HCT116 (cell line): ENCODE measurements at regions of chr3 and their contacts with region 1.

Region 1: GRCh38 chr3:45123030-45123429 is 23.1 kb downstream of the CDCP1 start:
- DNase-seq: no peak
- ATAC-seq: peak; percentile 3; the same call in 1 of the 2 replicates
- H3K4me3 ChIP-seq: peak overlapping the region; percentile 6 to 33; a peak in 3 of 4 replicates
- H3K27ac ChIP-seq: peak overlapping the region; percentile 91
- H3K4me1 ChIP-seq: peaks cover 96 to 100% of the 10 kb centered on the region in 2 experiments
- H3K27me3 ChIP-seq: no peaks in the 10 kb centered on the region
- CTCF ChIP-seq: no peak
- POLR2A ChIP-seq: no peak
- RAD21 ChIP-seq: no peak

Region 2: GRCh38 chr3:45043728-45044299 is 79.2 kb before region 1 on chr3:
- CTCF ChIA-PET with region 1: interaction called, 10 read pairs
- POLR2A ChIA-PET with region 1: no interaction called
- RAD21 ChIA-PET with region 1: no interaction called
- intact Hi-C with region 1: loop called (anchors 5 kb)
- DNase-seq: no peak
- ATAC-seq: peak; percentile 26; the same call in 1 of the 2 replicates
- H3K4me3 ChIP-seq: no peak overlapping the region
- H3K27ac ChIP-seq: no peak overlapping the region
- H3K4me1 ChIP-seq: peaks cover 8 to 20% of the 10 kb centered on the region in 2 experiments; a peak in 3 of 4 replicates
- H3K27me3 ChIP-seq: no peaks in the 10 kb centered on the region
- CTCF ChIP-seq: 0 out of 6 replicates have a peak, but pooled peaks of 1 of the 3 experiments have one; percentile 38
- POLR2A ChIP-seq: no peak
- RAD21 ChIP-seq: peak; percentile 66

Region 3: DNA sequence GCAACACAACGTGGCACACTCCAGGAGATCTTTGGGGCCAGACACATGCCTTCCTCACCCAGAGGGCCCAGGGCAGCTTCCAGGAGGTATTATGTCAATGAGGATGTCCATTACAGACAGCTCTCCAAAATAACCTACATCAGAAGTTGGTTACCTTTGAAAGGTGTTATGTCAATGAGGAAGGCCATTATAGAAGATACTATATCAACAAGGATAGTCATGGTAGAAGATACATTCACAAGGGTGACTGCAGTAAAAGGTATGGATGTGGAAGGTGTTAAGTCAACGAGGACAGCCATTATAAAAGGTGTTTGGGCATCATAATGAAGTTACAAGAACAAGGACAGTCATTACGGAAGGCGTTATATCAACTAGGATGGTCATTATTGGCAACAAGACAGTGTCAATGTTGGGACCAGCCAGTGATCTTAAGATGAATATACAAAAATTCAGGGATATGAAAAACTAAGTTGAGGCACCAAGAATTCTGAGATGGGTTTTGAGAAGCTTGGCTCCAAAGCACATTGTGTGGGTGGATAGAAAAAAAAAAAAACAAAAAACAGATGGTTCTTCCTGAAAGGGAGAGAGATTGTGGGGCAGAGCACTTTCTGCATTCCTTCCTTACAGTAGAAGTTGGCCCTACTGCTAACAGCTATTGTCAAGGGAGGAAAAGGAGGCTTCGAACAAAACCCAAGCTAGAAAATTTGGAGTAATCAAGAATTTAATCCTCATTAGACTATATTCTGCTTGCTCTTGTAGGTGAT is 11.9 kb after region 1 on chr3:
- CTCF ChIA-PET with region 1: interaction called, 3 read pairs
- POLR2A ChIA-PET with region 1: interaction called, 31 read pairs
- RAD21 ChIA-PET with region 1: interaction called in 1 of 2 experiments, 3 read pairs
- intact Hi-C with region 1: loop called (anchors 1 kb)
- DNase-seq: no peak
- ATAC-seq: no peak
- H3K4me3 ChIP-seq: 0 out of 4 replicates have a peak overlapping the region, but pooled peaks of 1 of the 2 experiments have one; percentile 2
- H3K27ac ChIP-seq: peak overlapping the region; percentile 92
- H3K4me1 ChIP-seq: peaks cover 89 to 100% of the 10 kb centered on the region in 2 experiments
- H3K27me3 ChIP-seq: no peaks in the 10 kb centered on the region
- CTCF ChIP-seq: no peak
- POLR2A ChIP-seq: no peak
- RAD21 ChIP-seq: no peak

Region 4: DNA sequence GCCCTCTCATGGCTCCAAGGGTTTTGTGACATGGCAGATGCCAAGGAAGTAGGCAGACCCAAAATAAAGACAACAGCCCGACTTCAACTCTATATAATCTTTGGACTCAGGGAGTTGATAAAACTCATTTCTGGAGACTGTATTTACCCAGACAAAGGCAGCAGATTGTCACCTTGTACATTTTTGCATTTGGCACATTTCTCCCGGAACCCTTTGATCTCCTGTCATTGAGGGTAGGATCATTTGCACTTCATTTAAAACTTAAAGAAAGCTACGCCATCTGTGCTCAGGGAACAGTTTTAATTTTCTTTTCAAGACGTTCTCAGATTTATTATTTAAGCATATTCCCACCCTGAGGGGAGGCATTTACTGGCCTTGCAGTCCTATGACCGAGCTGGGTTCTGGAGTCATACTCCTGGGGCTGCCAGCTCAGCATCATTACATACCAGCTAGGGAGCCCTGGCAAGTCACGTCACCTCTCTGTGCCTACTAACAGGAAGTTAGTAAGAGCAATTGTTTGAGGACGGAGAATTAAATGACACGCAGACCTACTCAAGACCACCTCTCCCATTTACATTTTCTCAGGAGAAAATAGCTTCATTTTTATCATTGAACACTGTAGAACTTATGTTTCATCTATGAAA is 17.2 kb after region 1 on chr3:
- CTCF ChIA-PET with region 1: interaction called, 3 read pairs
- POLR2A ChIA-PET with region 1: interaction called, 31 read pairs
- RAD21 ChIA-PET with region 1: no interaction called
- intact Hi-C with region 1: no loop called
- DNase-seq: no peak
- ATAC-seq: no peak
- H3K4me3 ChIP-seq: no peak overlapping the region
- H3K27ac ChIP-seq: peak overlapping the region; percentile 69
- H3K4me1 ChIP-seq: peaks cover 82 to 95% of the 10 kb centered on the region in 2 experiments
- H3K27me3 ChIP-seq: no peaks in the 10 kb centered on the region
- CTCF ChIP-seq: no peak
- POLR2A ChIP-seq: no peak
- RAD21 ChIP-seq: no peak

Region 5: DNA sequence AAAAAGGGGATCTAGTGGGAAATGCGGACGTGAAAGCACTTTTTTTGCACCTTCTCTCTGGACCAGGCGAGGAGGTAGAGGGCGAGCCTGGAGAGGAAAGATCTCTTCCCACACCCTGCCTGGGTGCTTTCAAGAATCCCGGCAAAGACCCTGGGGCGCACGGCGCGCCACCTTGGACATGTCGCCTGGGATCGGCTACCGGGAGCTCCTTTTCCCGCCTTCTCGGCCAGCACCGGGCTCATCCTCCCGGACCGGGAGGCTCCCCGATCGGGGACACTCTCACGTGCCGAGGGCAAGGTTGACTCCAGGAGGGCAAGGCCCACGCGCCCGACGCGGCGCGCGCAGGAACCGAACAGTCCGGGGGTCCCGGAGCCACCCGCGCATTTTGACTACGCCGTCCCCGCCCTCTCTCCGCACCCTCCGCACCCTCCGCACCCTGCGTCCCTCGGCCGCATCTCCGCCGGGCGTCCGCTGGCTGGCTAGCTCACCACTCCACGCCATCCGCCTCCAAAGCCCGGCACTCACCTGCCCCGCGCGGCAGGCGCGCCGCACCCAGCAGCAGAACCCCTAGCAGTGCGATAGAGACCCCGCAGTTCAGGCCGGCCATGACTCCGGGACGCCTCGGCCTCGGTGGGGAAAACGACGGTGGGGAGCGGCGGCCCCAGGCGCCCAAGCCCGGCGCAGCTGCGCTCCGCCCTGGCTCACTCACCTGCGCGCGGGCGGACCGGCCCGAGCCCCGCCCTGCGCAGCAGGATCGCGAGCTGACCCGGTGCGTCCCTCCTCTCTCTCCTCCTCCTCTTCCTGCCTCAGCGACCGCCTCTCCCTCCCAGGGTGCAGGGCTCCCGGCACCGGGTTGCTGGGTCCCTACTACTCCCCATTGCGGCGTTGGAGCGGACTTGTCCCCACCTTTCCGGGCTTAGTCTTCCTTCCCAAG is 22.9 kb after region 1 on chr3 and contains the start of gene CDCP1:
- CTCF ChIA-PET with region 1: no interaction called
- POLR2A ChIA-PET with region 1: interaction called, 31 read pairs
- RAD21 ChIA-PET with region 1: no interaction called
- intact Hi-C with region 1: no loop called
- DNase-seq: no peak
- ATAC-seq: peak; percentile 98
- H3K4me3 ChIP-seq: peak within 1 kb of the TSS; percentile 86 to 97
- H3K27ac ChIP-seq: peak within 1 kb of the TSS; percentile 92
- H3K4me1 ChIP-seq: peaks cover 30 to 50% of the 10 kb centered on the region in 2 experiments
- H3K27me3 ChIP-seq: no peaks in the 10 kb centered on the region
- CTCF ChIP-seq: no peak
- POLR2A ChIP-seq: peak; percentile 86
- RAD21 ChIP-seq: no peak
- total RNA-seq, gene CDCP1: 196 TPM

Region 6: GRCh38 chr3:45199837-45200648 is 77.0 kb after region 1 on chr3:
- CTCF ChIA-PET with region 1: no interaction called
- POLR2A ChIA-PET with region 1: interaction called, 16 read pairs
- RAD21 ChIA-PET with region 1: no interaction called
- intact Hi-C with region 1: no loop called
- DNase-seq: peak; percentile 95
- ATAC-seq: peak; percentile 88
- H3K4me3 ChIP-seq: peak overlapping the region; percentile 4 to 40; a peak in 2 of 4 replicates
- H3K27ac ChIP-seq: peak overlapping the region; percentile 78
- H3K4me1 ChIP-seq: peaks cover 22 to 33% of the 10 kb centered on the region in 2 experiments
- H3K27me3 ChIP-seq: no peaks in the 10 kb centered on the region
- CTCF ChIP-seq: no peak
- POLR2A ChIP-seq: no peak
- RAD21 ChIP-seq: no peak; the same call in 1 of the 2 replicates

Region 7: GRCh38 chr3:45210308-45211041 is 87.4 kb after region 1 on chr3:
- CTCF ChIA-PET with region 1: interaction called, 11 read pairs
- POLR2A ChIA-PET with region 1: interaction called, 6 read pairs
- RAD21 ChIA-PET with region 1: interaction called, 3 to 4 read pairs
- intact Hi-C with region 1: no loop called
- DNase-seq: peak; percentile 70
- ATAC-seq: peak; percentile 98
- H3K4me3 ChIP-seq: no peak overlapping the region
- H3K27ac ChIP-seq: no peak overlapping the region
- H3K4me1 ChIP-seq: peaks cover 5 to 32% of the 10 kb centered on the region in 2 experiments; a peak in 3 of 4 replicates
- H3K27me3 ChIP-seq: no peaks in the 10 kb centered on the region
- CTCF ChIP-seq: peak; percentile 83 to 86 (median 86)
- POLR2A ChIP-seq: no peak
- RAD21 ChIP-seq: peak; percentile 92